Gastrocnemius medialis (tissue), 4 donors: ENCODE measurements at regions of chr4 and their contacts with region 1.

Region 1: GRCh38 chr4:139734875-139735380 is 69.3 kb downstream of the MGST2 start:
- DNase-seq: peak; percentile 69 to 79
- ATAC-seq: peak; percentile 84 to 86
- H3K4me3 ChIP-seq: peak overlapping the region; percentile 56 to 70 (median 64)
- H3K27ac ChIP-seq: peak overlapping the region; percentile 70 to 85 (median 74)
- H3K4me1 ChIP-seq: peaks cover 23 to 27% of the 10 kb centered on the region in 2 donors
- H3K27me3 ChIP-seq: no peaks in the 10 kb centered on the region
- CTCF ChIP-seq: peak; percentile 71 to 94 (median 86)
- POLR2A ChIP-seq: no peak

Region 2: GRCh38 chr4:139619644-139620043 is 115.3 kb before region 1 on chr4:
- in situ Hi-C with region 1: no loop called
- intact Hi-C with region 1: no loop called
- DNase-seq: no peak
- ATAC-seq: no peak
- H3K4me3 ChIP-seq: no peak overlapping the region
- H3K27ac ChIP-seq: no peak overlapping the region
- H3K4me1 ChIP-seq: no peaks in the 10 kb centered on the region
- H3K27me3 ChIP-seq: no peaks in the 10 kb centered on the region
- CTCF ChIP-seq: peak in 3 of 5 experiments; percentile 20 to 33 (median 25)
- POLR2A ChIP-seq: no peak

Region 3: DNA sequence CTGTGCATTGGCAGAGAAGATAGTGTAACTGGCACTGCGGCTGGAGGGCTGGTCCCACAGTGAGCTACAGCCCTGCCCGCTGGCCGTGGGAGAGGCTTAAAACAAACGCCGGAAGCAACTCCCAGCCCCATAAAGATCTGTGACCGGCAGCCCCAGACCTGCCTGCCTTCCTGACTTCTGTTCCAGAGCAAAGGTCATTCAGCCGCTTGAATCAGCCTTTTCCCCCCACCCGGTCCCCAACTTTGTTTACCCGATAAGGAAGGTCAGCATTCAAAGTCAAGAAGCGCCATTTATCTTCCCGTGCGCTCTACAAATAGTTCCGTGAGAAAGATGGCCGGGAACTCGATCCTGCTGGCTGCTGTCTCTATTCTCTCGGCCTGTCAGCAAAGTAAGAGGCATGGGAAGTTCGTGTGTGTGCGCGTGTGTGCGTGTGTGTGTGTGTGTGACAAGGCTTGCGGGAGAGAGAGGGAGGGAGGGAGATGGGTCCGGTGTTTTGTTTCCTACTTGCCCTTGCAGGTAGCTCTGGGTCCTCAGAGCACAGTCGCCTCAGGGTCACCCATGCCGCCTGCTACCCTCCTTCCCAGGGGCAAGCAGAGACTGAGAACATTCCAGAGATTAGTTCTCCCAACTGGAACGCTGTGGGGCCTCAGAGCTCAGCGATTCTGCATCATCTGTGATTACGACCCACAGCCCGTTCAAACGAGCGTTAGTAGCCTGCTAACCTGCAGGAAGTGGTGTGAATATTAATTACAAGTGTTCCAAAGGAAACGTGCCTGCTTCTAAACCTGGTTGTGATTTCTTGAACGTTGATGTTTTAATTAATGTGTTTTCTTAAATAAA is 69.0 kb before region 1 on chr4 and contains the start of gene MGST2:
- in situ Hi-C with region 1: loop called in 1 of 4 experiments (anchors 10 kb)
- intact Hi-C with region 1: loop called (anchors 5 kb)
- DNase-seq: peak; percentile 57 to 84
- ATAC-seq: peak; percentile 78 to 80
- H3K4me3 ChIP-seq: peak within 1 kb of the TSS; percentile 60 to 63 (median 63)
- H3K27ac ChIP-seq: peak within 1 kb of the TSS; percentile 84 to 91 (median 87)
- H3K4me1 ChIP-seq: peaks cover 22 to 39% of the 10 kb centered on the region in 2 donors
- H3K27me3 ChIP-seq: no peaks in the 10 kb centered on the region
- CTCF ChIP-seq: no peak
- POLR2A ChIP-seq: peak in 1 of 2 donors; percentile 39
- total RNA-seq, gene MGST2: 17.3 to 38.6 (median 30.9) TPM

Region 4: GRCh38 chr4:139815778-139816601 is 81.1 kb after region 1 on chr4:
- in situ Hi-C with region 1: no loop called
- intact Hi-C with region 1: loop called (anchors 2 kb)
- DNase-seq: peak; percentile 65 to 71
- ATAC-seq: peak; percentile 91 to 94
- H3K4me3 ChIP-seq: peak overlapping the region; percentile 47 to 69 (median 56)
- H3K27ac ChIP-seq: peak overlapping the region; percentile 73 to 83 (median 80)
- H3K4me1 ChIP-seq: peaks cover 22 to 44% of the 10 kb centered on the region in 2 donors
- H3K27me3 ChIP-seq: no peaks in the 10 kb centered on the region
- CTCF ChIP-seq: no peak
- POLR2A ChIP-seq: peak; percentile 49 to 55

Region 5: DNA sequence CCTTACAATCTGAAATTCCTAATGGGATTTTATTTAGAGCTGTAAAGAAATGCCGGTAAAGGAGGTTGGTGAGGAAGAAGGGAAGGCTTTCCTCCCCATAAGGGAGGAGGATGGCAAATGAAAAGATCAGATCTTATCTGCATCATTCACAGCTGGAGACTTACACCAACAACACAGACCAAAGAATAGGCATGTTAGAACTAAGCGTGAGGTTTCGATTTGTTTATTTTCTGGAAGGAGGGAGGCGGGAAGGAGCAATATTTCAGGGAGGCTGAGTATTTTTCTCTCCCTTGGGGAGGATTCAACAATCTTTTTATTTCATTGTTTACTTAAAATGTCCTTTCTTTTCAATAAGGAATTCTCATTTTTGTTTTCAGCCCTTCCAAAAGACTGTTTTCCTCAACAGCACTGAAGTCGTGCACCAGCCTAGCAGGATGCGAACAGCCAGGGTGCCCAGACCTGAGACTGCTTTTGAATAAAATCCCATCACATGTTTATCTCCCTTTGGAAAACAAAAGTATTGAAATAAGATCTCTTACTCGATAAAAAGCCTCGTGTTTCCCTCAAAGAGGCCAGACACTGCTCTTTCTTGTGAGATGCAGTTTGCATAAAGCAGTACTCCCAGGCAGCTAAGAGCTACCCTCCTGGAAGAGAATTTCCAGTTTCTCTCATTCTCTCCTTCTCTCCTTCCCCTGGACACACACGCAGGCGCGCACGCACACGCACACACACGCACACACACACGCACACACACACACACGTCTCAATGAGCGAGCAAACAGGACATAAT is 166.8 kb after region 1 on chr4:
- in situ Hi-C with region 1: no loop called
- intact Hi-C with region 1: loop called (anchors 5 kb)
- DNase-seq: no peak
- ATAC-seq: peak; percentile 43 to 48
- H3K4me3 ChIP-seq: peak overlapping the region; percentile 43 to 57 (median 50)
- H3K27ac ChIP-seq: peak overlapping the region in 3 of 4 donors; percentile 13 to 41 (median 35)
- H3K4me1 ChIP-seq: peaks cover 10 to 15% of the 10 kb centered on the region in 2 donors
- H3K27me3 ChIP-seq: no peaks in the 10 kb centered on the region
- CTCF ChIP-seq: no peak
- POLR2A ChIP-seq: no peak

Region 6: DNA sequence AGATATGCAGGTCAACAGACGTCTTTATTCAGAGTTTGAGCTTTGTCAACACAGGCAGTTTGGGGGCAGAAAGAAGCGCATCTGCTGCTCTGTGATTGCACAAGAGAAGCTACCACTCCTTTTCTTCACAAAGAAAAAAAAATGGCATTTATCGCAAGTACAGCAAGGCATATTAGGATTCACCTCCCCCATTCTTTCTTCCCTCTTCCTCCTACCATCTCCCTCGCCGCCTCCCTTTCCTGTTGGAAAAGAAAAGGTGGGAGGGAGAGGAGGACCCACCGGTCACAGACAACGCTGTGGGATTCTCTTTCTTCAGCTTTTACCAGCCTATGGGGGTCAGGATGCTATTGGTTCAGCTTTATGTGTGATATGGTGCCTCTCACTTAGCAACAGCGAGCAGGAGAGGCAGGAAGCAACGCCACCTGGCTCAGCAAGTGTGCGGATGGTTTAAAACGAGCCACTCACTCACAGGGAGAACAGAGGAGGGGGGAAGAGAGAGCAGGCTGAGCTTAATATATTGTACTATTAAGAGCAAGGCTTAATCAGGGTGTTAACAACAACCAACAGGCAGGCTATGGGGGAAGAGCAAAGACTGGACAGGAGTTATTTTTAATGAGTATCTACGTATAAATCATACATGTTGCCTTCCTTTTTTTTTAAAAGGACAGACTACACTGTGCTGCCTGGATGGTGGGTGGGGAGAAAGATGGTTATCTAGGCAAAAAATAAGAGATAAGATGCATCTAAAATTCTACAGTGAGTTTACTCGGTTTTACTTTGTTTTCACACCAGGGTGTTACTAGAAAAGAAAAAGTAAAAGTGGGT is 314.3 kb after region 1 on chr4:
- in situ Hi-C with region 1: loop called in 1 of 4 experiments (anchors 10 kb)
- intact Hi-C with region 1: loop called (anchors 2 kb)
- DNase-seq: peak in 1 of 2 donors; percentile 17
- ATAC-seq: peak; percentile 39 to 40
- H3K4me3 ChIP-seq: peak overlapping the region; percentile 35 to 46 (median 44)
- H3K27ac ChIP-seq: peak overlapping the region; percentile 21 to 71 (median 50)
- H3K4me1 ChIP-seq: peaks cover 24 to 26% of the 10 kb centered on the region in 2 donors
- H3K27me3 ChIP-seq: no peaks in the 10 kb centered on the region
- CTCF ChIP-seq: no peak
- POLR2A ChIP-seq: no peak

Region 7: DNA sequence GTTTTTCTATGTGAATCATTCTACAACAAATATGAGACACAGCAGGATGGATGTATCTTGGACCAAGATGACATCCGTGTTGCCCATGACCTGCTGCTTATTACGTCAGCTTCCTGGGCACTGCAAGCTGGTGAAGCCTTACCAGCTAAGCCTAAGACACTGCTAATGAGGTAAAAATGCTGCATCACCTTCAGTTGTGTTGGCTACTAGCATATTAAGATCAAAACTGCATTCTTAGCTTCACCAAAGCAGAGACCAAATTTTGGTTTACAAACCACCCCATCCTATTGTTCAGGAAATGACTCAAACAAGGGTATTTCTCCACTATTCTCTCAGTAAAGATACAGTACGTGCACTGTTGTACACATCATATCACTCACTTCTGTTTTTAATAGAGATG is 368.7 kb after region 1 on chr4:
- in situ Hi-C with region 1: no loop called
- intact Hi-C with region 1: no loop called
- DNase-seq: no peak
- ATAC-seq: no peak
- H3K4me3 ChIP-seq: no peak overlapping the region
- H3K27ac ChIP-seq: no peak overlapping the region
- H3K4me1 ChIP-seq: peaks cover 3 to 20% of the 10 kb centered on the region in 2 donors
- H3K27me3 ChIP-seq: no peaks in the 10 kb centered on the region
- CTCF ChIP-seq: no peak
- POLR2A ChIP-seq: no peak

Region 8: GRCh38 chr4:140252742-140253555 is 518.0 kb after region 1 on chr4:
- in situ Hi-C with region 1: loop called (anchors 10 kb)
- intact Hi-C with region 1: loop called (anchors 1 kb)
- DNase-seq: peak; percentile 29 to 39
- ATAC-seq: peak; percentile 66 to 72
- H3K4me3 ChIP-seq: peak overlapping the region; percentile 58 to 75 (median 66)
- H3K27ac ChIP-seq: peak overlapping the region; percentile 75 to 86 (median 80)
- H3K4me1 ChIP-seq: peaks cover 13 to 23% of the 10 kb centered on the region in 2 donors
- H3K27me3 ChIP-seq: no peaks in the 10 kb centered on the region
- CTCF ChIP-seq: peak; percentile 69 to 99 (median 87)
- POLR2A ChIP-seq: no peak

Region 9: DNA sequence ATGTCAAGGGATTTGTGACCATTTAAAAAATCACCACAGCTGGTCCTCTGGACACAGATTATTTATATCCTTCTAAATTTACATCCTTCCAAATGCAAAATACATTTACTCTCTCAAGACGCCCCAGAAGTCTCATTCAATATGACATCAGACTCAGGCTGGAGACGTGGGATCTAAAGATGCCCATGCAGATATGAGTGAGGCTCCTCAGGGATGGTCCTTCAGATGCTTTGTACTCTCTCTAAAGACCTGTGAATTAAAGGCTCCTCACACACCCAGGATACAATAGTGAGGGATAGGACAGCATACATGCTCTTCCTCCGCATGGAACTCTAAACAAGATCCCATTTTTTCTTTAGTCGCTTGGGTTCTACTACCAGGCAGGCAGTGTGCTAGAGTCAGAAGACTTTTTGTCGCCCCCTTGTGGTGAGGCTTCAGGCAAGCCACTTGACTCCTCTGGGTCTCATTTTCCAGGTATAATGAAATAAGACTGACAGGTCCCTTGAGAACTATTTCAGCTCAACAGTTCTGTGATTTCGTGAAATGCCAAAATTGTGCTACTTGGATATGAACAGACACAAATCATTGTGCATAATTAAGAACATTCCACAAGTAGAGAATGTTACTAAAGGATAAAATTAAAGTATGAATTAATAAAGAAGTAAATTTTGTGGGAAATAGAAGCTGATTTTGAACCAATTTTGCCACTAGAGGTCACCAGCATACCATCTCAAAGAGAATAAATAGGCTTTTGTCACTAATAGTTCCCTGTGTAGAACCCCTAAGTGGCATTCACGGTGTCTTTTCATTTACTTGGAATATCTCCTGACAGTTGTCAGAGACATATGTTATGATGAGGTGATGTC is 624.9 kb after region 1 on chr4:
- in situ Hi-C with region 1: loop called in 1 of 4 experiments (anchors 25 kb)
- intact Hi-C with region 1: no loop called
- DNase-seq: peak; percentile 36 to 48
- ATAC-seq: peak; percentile 62 to 87
- H3K4me3 ChIP-seq: no peak overlapping the region
- H3K27ac ChIP-seq: no peak overlapping the region
- H3K4me1 ChIP-seq: no peaks in the 10 kb centered on the region
- H3K27me3 ChIP-seq: no peaks in the 10 kb centered on the region
- CTCF ChIP-seq: peak; percentile 48 to 86 (median 61)
- POLR2A ChIP-seq: no peak